ENCODE measurements at regions of chr16 and their contacts with region 1.

Region 1: DNA sequence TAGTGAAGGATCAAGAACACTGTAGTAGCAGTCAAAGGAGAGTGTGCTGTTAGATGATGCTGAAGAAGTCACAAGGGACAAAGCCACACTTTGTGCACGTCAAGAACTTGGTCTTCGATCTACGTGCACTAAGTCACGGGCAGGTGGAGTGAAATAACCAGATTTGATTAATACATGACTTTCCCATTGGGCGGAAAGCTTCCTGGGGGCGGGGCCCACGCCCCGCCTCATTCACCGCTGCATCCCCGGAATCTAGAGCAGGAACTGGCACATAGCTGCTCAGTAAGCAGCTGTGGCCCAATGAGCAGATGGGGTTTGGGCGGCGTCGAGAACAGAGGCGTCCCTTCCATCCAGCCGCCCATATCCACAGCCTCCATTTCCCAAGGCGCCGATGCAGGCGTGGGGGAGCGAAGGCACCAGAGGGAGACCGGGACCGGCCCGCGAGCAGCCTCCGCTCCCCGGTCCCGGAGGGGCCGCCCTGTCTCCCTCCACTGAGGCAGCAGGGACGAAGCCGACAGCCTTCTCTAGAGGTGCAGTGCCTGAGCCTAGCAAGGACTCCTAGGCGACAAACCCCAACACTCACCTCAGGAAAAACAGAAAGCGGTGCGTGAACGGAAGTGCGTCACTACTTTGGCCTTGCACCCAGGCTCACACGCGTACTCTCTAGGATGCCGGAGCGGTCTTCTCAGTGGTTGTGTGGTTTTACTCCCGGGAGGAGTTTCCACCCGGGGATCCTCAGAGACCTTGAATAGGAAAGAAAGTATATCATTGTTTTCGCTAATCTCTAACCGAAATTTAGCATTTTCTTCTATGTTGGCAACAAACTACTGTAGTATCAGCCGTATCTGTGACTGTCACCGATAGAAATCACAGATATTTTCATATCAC is 4.9 kb downstream of the ZNF19 start:
- DNase-seq: peak; percentile 93
- H3K4me3 Mint-ChIP-seq: peak overlapping the region; percentile 87
- H3K27ac Mint-ChIP-seq: peak overlapping the region; percentile 84
- H3K4me1 Mint-ChIP-seq: peaks cover 12% of the 10 kb centered on the region
- H3K27me3 Mint-ChIP-seq: no peaks in the 10 kb centered on the region

Region 2: GRCh38 chr16:71461686-71462648 is 22.3 kb before region 1 on chr16 and contains the start of gene ZNF23:
- intact Hi-C with region 1: loop called (anchors 1 kb)
- DNase-seq: peak; percentile 94
- H3K4me3 Mint-ChIP-seq: peak within 1 kb of the TSS; percentile 91
- H3K27ac Mint-ChIP-seq: peak within 1 kb of the TSS; percentile 81
- H3K4me1 Mint-ChIP-seq: peaks cover 9% of the 10 kb centered on the region
- H3K27me3 Mint-ChIP-seq: no peaks in the 10 kb centered on the region
- total RNA-seq, gene ZNF23: 5.2 and 6.1 TPM in 2 replicates

Region 3: DNA sequence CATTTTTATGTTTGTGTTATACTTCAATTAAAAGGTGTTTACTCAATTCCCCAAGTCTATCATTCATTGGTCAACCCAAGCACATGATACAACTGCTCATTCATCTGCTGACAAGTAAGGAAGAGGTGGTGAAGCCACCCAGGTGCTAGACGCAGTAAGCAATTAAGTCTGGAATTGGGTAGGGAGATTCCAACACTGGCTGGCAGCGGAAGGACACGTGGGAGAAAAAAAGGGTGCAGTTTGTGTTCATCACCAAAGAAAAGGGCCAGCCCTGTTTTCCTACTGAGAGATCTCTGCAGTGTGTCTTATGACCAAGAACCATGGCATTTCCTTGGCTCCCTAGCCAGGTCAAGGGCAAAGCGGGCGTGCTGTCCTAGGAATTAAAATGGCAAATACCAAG is 10.4 kb before region 1 on chr16:
- intact Hi-C with region 1: no loop called
- DNase-seq: no peak
- H3K4me3 Mint-ChIP-seq: no peak overlapping the region
- H3K27ac Mint-ChIP-seq: no peak overlapping the region
- H3K4me1 Mint-ChIP-seq: peaks cover 9% of the 10 kb centered on the region
- H3K27me3 Mint-ChIP-seq: no peaks in the 10 kb centered on the region

Region 4: GRCh38 chr16:71585318-71585703 is 101.1 kb after region 1 on chr16:
- intact Hi-C with region 1: no loop called
- DNase-seq: no peak
- H3K4me3 Mint-ChIP-seq: no peak overlapping the region
- H3K27ac Mint-ChIP-seq: no peak overlapping the region
- H3K4me1 Mint-ChIP-seq: no peaks in the 10 kb centered on the region
- H3K27me3 Mint-ChIP-seq: peaks cover 11% of the 10 kb centered on the region